SK-N-SH (cell line): ENCODE measurements at regions of chr20 and their contacts with region 1.

Region 1: DNA sequence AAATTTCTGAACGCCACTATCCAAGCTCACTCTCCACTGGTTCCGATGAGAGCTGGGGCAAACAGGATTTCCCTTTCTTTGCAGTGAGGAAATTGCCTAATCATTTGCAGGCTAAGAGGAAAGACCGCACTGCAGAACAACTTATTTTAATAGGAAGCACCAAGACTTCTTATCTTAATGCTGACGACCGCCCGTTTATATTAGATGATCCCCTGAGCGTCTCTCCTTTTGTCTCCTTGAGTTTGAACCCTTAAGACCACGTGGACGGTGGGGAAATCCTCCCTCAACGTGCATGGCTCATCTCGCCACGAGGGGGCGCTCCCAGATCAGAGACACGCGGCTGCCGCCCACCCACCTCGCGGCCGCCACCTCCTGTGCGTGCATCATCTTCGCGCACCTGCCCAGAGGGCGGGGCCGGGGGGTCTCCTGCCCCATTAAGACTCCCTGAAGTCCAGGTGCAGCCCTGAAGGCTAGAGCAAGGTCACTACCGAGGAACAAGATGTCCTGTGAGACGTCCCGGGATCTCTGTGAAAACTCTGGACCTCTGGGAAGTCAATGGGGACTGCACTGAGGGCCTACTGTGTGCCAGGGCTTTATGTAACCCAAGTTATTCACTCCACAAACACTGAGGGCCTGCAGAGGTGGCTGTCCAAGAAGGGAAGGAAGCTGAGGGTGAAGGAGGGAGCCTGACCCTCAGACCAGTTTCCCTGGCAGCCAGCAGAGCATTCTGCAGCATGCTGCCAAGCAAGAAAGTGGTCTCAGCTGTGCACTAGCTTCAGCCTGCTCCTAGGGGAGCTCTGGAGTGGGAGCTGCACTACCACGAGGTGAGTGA is 28.1 kb downstream of the PDYN start:
- DNase-seq: peak; percentile 84
- H3K4me3 ChIP-seq: no peak overlapping the region
- H3K27ac ChIP-seq: no peak overlapping the region
- H3K4me1 ChIP-seq: no peaks in the 10 kb centered on the region; a peak in 1 of 4 replicates
- H3K27me3 ChIP-seq: peaks cover 34% of the 10 kb centered on the region; the same call in 1 of the 2 replicates
- CTCF ChIP-seq: peak; percentile 93
- EP300 ChIP-seq: no peak
- RAD21 ChIP-seq: peak; percentile 79

Region 2: GRCh38 chr20:1952737-1953530 is 12.8 kb before region 1 on chr20:
- CTCF ChIA-PET with region 1: interaction called, 21 read pairs
- POLR2A ChIA-PET with region 1: no interaction called
- DNase-seq: no peak
- H3K4me3 ChIP-seq: no peak overlapping the region
- H3K27ac ChIP-seq: no peak overlapping the region
- H3K4me1 ChIP-seq: peaks cover 9 to 12% of the 10 kb centered on the region in 2 experiments; a peak in 2 of 4 replicates
- H3K27me3 ChIP-seq: no peaks in the 10 kb centered on the region
- CTCF ChIP-seq: no peak
- EP300 ChIP-seq: no peak
- RAD21 ChIP-seq: no peak

Region 3: GRCh38 chr20:2093159-2093781 is 127.5 kb after region 1 on chr20:
- CTCF ChIA-PET with region 1: interaction called, 10 read pairs
- POLR2A ChIA-PET with region 1: no interaction called
- DNase-seq: peak; percentile 36
- H3K4me3 ChIP-seq: no peak overlapping the region; a peak in 1 of 4 replicates
- H3K27ac ChIP-seq: no peak overlapping the region
- H3K4me1 ChIP-seq: no peaks in the 10 kb centered on the region
- H3K27me3 ChIP-seq: peaks cover 26% of the 10 kb centered on the region
- CTCF ChIP-seq: peak; percentile 70
- EP300 ChIP-seq: no peak
- RAD21 ChIP-seq: peak; percentile 67